PC-9 (cell line): ENCODE measurements at regions of chrX and their contacts with region 1.

Region 1: GRCh38 chrX:68681443-68681941 is 34.0 kb downstream of the STARD8 start:
- DNase-seq: no peak
- H3K4me3 ChIP-seq: no peak overlapping the region
- H3K27ac ChIP-seq: no peak overlapping the region
- H3K4me1 ChIP-seq: no peaks in the 10 kb centered on the region
- H3K27me3 ChIP-seq: no peaks in the 10 kb centered on the region
- CTCF ChIP-seq: no peak

Region 2: DNA sequence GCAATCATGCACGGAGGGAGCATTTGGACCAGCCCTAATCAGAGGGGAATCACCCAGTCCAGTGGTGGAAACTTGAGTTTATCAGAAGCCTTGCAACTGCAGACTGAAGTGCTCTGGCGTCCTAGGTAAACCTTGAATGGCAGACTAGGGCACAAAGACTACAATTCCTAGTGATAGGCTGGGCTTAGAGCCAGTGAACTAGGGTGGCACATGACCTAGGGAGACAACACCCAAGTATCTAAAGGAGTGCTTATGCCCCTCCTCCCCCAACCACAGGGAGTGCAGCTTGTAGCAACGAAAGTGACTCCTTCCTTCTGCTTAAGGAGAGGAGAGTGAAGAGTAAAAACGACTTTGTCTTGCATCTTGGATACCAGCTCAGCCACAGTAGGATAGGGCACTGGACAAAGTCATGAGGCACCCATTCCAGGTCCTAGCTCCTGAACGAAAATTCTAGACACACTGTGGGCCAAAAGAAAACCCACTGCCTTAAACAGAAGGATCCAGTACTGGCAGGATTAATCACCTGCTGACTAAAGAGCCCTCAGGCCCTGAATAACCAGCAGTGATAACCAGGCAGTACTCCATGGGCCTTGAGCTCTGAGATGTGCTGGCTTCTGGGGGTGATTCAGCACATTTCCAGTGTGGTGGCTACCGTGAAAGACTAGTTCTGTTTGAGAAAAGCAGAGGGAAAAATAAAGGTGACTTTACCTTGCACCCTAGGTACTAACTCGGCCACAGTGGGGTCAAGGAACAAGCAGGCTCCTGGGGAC is 92.7 kb before region 1 on chrX:
- CTCF ChIA-PET with region 1: no interaction called
- POLR2A ChIA-PET with region 1: interaction called, 11 read pairs
- intact Hi-C with region 1: no loop called
- DNase-seq: peak; percentile 44 to 47
- H3K4me3 ChIP-seq: no peak overlapping the region
- H3K27ac ChIP-seq: peak overlapping the region; percentile 72
- H3K4me1 ChIP-seq: peaks cover 22% of the 10 kb centered on the region
- H3K27me3 ChIP-seq: no peaks in the 10 kb centered on the region
- CTCF ChIP-seq: no peak

Region 3: DNA sequence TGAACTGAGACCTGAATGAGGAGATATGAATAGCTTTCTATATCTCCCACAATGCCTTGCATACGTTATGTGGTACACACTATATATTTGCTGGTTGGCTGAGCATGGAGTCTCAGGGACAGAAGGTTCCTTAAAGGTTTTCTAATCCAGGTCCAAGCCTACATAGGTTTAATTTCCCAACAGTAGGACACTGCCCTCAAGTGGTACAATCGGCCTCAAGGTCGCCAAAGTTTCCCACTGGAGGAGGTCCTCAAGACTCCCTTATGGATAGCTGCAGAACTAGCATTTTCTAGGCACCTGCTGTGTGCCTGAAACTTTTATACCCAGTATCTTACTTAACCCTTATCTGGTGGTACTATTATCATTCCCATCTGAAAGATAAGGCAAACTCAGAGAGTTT is 126.3 kb after region 1 on chrX:
- CTCF ChIA-PET with region 1: no interaction called
- POLR2A ChIA-PET with region 1: no interaction called
- intact Hi-C with region 1: no loop called
- DNase-seq: peak in 1 of 2 experiments; percentile 7
- H3K4me3 ChIP-seq: no peak overlapping the region
- H3K27ac ChIP-seq: no peak overlapping the region
- H3K4me1 ChIP-seq: no peaks in the 10 kb centered on the region
- H3K27me3 ChIP-seq: no peaks in the 10 kb centered on the region
- CTCF ChIP-seq: peak; percentile 31; the same call in 1 of the 2 replicates